A673 (cell line): ENCODE measurements at regions of chr11 and their contacts with region 1.

Region 1: GRCh38 chr11:69620683-69621290 is 20.2 kb upstream of the CCND1 start:
- DNase-seq: peak; percentile 91
- H3K4me3 ChIP-seq: no peak overlapping the region
- H3K27ac ChIP-seq: peak overlapping the region; percentile 98
- H3K4me1 ChIP-seq: peaks cover 65% of the 10 kb centered on the region
- H3K27me3 ChIP-seq: no peaks in the 10 kb centered on the region
- CTCF ChIP-seq: no peak

Region 2: GRCh38 chr11:69209421-69210309 is 411.1 kb before region 1 on chr11:
- CTCF ChIA-PET with region 1: interaction called, 10 read pairs
- POLR2A ChIA-PET with region 1: interaction called, 13 read pairs
- intact Hi-C with region 1: loop called (anchors 1 kb)
- DNase-seq: no peak
- H3K4me3 ChIP-seq: no peak overlapping the region
- H3K27ac ChIP-seq: peak overlapping the region; percentile 22
- H3K4me1 ChIP-seq: peaks cover 27% of the 10 kb centered on the region
- H3K27me3 ChIP-seq: no peaks in the 10 kb centered on the region
- CTCF ChIP-seq: no peak

Region 3: DNA sequence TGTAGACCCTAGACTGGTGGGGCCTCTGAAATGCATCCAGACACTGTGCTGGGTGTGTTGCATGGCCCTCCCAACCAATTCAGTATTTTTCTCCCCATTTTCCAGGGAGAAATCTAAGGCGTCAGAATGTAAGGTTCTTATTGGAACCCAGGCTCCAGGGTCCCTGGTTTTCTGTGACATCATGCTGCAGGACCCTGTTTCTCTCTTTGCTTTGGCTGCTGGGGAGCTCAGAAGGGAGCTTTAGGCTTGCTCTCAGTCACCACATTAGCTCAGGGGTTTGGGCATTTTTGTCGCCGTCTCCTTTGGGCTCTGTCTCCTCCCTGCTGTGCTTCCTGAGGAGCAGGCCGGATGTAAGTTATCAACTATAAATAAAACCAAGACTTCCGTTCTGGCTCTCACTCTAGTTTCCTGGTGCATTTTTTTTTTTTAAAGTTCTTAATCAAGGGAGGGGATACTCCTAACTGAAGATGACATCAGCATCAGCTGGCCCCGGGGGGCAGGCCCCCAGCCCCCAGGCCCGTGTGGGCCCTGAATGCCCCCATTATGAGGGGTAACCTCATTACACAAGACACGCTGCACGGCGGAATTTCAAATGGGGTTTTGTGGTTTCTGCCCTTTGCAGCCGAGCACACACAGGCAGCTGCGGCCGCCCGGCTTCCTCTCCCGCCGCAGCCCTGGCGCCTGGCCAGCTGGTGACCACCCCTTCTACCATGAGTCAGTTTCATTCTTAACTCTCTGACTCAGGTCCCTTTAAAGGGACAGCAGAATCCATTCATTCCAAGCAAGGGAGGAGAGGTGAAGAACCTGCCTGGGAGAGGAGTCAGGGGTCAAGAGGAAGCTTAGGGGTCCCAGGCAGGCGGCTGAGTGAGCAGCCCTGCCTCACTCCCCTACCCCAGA is 323.6 kb before region 1 on chr11:
- CTCF ChIA-PET with region 1: interaction called, 11 read pairs
- POLR2A ChIA-PET with region 1: no interaction called
- intact Hi-C with region 1: loop called (anchors 1 kb)
- DNase-seq: peak; percentile 98
- H3K4me3 ChIP-seq: peak overlapping the region; percentile 77
- H3K27ac ChIP-seq: peak overlapping the region; percentile 92
- H3K4me1 ChIP-seq: peaks cover 74% of the 10 kb centered on the region
- H3K27me3 ChIP-seq: no peaks in the 10 kb centered on the region
- CTCF ChIP-seq: no peak

Region 4: GRCh38 chr11:69311767-69312385 is 308.9 kb before region 1 on chr11:
- CTCF ChIA-PET with region 1: interaction called, 4 read pairs
- POLR2A ChIA-PET with region 1: interaction called, 5 read pairs
- intact Hi-C with region 1: loop called (anchors 1 kb)
- DNase-seq: peak; percentile 100
- H3K4me3 ChIP-seq: no peak overlapping the region
- H3K27ac ChIP-seq: peak overlapping the region; percentile 94
- H3K4me1 ChIP-seq: peaks cover 76% of the 10 kb centered on the region
- H3K27me3 ChIP-seq: no peaks in the 10 kb centered on the region
- CTCF ChIP-seq: no peak

Region 5: GRCh38 chr11:69443138-69443967 is 177.4 kb before region 1 on chr11:
- CTCF ChIA-PET with region 1: no interaction called
- POLR2A ChIA-PET with region 1: interaction called, 3 read pairs
- intact Hi-C with region 1: loop called (anchors 1 kb)
- DNase-seq: peak; percentile 98
- H3K4me3 ChIP-seq: peak overlapping the region; percentile 38
- H3K27ac ChIP-seq: peak overlapping the region; percentile 79
- H3K4me1 ChIP-seq: peaks cover 29% of the 10 kb centered on the region
- H3K27me3 ChIP-seq: no peaks in the 10 kb centered on the region
- CTCF ChIP-seq: no peak

Region 6: GRCh38 chr11:69480547-69481392 is 140.0 kb before region 1 on chr11:
- CTCF ChIA-PET with region 1: no interaction called
- POLR2A ChIA-PET with region 1: no interaction called
- intact Hi-C with region 1: no loop called
- DNase-seq: no peak
- H3K4me3 ChIP-seq: no peak overlapping the region
- H3K27ac ChIP-seq: no peak overlapping the region
- H3K4me1 ChIP-seq: no peaks in the 10 kb centered on the region
- H3K27me3 ChIP-seq: no peaks in the 10 kb centered on the region
- CTCF ChIP-seq: no peak

Region 7: GRCh38 chr11:69642913-69643632 is 22.3 kb after region 1 on chr11:
- CTCF ChIA-PET with region 1: interaction called, 4 read pairs
- POLR2A ChIA-PET with region 1: interaction called, 7 read pairs
- intact Hi-C with region 1: loop called (anchors 1 kb)
- DNase-seq: peak; percentile 92
- H3K4me3 ChIP-seq: peak overlapping the region; percentile 86
- H3K27ac ChIP-seq: peak overlapping the region; percentile 99
- H3K4me1 ChIP-seq: peaks cover 30% of the 10 kb centered on the region
- H3K27me3 ChIP-seq: no peaks in the 10 kb centered on the region
- CTCF ChIP-seq: peak; percentile 82

Region 8: GRCh38 chr11:69744435-69744834 is 123.6 kb after region 1 on chr11:
- CTCF ChIA-PET with region 1: no interaction called
- POLR2A ChIA-PET with region 1: no interaction called
- intact Hi-C with region 1: no loop called
- DNase-seq: no peak
- H3K4me3 ChIP-seq: no peak overlapping the region
- H3K27ac ChIP-seq: no peak overlapping the region
- H3K4me1 ChIP-seq: no peaks in the 10 kb centered on the region
- H3K27me3 ChIP-seq: no peaks in the 10 kb centered on the region
- CTCF ChIP-seq: no peak

Region 9: DNA sequence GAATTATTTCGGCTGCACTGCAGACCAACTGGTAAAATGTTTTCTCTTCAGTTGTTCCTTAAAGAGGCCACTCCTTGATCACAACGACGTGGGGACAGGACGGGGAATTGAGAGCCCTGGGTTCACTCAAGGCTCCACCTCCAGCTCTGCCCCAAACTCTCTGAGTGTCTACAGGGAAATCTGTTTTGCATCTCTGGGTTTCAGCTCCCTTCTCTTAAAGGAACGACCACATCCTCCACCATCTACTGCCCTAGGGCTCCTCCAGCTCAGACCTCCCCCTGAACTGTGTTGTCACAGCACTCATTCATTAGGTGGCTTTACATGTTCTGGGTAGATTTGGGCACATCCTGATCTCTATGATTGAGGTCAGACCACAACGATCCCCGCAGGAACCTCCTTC is 644.6 kb after region 1 on chr11:
- CTCF ChIA-PET with region 1: no interaction called
- POLR2A ChIA-PET with region 1: no interaction called
- intact Hi-C with region 1: loop called (anchors 5 kb)
- DNase-seq: peak; percentile 48
- H3K4me3 ChIP-seq: no peak overlapping the region
- H3K27ac ChIP-seq: peak overlapping the region; percentile 82
- H3K4me1 ChIP-seq: peaks cover 42% of the 10 kb centered on the region
- H3K27me3 ChIP-seq: no peaks in the 10 kb centered on the region
- CTCF ChIP-seq: no peak